Activated CD8-positive, alpha-beta T cell treated with anti-CD3 and anti-CD28 coated beads for 36 hours (primary cell): ENCODE measurements at regions of chr20 and their contacts with region 1.

Region 1: DNA sequence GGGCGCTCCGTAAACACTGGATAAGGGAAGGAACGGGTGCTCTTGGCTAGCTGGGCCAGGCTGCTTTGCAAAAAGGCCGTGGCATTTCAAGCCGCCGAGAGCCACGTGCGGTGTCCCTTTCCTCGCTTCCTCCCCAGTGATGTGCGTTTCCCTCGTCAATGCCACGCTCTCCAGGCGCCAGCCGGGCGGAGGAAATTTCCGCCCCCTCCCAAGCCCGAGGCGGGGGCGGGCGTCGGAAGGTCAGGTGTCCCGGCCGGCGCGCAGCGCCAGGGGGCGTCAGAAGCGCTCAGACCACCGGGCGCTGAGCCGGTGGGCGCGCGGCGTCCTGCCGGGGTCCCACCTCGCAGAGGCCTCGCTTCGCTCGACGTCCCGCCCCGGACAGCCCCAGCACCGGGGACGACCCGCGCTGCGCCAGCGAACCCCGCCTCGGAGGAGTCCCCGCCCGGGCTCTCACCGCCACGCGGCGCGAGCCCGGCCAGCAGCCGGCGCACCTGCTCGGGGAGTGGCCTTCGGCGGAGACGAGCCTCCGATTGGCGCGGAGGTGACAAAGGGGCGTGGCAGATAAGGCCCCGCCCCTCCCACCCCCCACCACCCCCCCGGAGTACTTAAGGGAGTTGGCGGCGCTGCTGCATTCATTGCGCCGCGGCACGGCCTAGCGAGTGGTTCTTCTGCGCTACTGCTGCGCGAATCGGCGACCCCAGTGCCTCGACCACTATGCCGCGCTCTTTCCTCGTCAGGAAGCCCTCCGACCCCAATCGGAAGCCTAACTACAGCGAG is at the start of gene SNAI1:
- DNase-seq: peak; percentile 81
- ATAC-seq: peak; percentile 89
- H3K4me3 Mint-ChIP-seq: peak within 1 kb of the TSS; percentile 65
- H3K27ac Mint-ChIP-seq: peak within 1 kb of the TSS; percentile 66
- H3K4me1 Mint-ChIP-seq: peaks cover 30% of the 10 kb centered on the region
- H3K27me3 Mint-ChIP-seq: peaks cover 3% of the 10 kb centered on the region
- CTCF ChIP-seq: peak; percentile 74
- total RNA-seq, gene SNAI1: 0.90 to 1.4 TPM

Region 2: GRCh38 chr20:49999329-49999728 is 16.8 kb after region 1 on chr20:
- CTCF ChIA-PET with region 1: interaction called, 20 read pairs
- POLR2A ChIA-PET with region 1: no interaction called
- intact Hi-C with region 1: no loop called
- DNase-seq: peak; percentile 86
- ATAC-seq: peak; percentile 83
- H3K4me3 Mint-ChIP-seq: no peak overlapping the region
- H3K27ac Mint-ChIP-seq: no peak overlapping the region
- H3K4me1 Mint-ChIP-seq: peaks cover 22% of the 10 kb centered on the region
- H3K27me3 Mint-ChIP-seq: peaks cover 3% of the 10 kb centered on the region
- CTCF ChIP-seq: no peak

Region 3: DNA sequence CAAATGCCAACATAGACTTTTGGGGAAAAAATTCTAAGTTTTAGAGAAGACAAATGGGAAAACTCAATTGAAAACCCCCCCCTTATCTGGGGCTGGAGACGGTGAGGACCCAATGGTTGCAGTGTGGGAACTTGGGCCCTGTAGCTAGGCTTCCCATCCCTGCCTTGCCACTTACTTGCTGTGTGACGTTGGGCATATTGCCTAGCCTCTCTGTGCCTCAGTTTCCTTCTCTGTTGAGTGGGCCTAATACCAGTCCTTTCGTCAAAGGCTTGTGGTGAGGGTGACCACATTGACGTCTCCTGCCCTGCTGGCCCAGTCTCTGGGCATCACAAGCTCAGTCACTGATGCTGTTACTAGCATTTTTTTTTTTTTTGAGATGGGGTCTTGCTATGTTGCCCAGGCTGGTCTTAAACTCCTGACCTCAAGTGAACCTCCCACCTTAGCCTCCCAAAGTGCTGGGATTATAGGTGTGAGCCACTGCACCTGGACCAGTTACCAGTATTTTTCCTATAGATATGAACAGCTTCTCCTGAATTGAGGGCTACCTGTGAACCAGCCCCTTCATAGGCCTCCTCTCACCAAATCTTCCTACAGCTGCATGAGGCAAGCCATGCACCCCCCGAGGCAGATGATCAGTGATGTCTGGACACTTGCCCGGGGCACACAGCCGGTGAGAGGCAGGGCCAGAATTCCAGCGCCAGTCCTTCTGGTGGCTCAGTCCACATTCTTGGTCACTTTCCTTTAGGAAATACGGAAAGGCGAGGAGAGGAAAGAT is 79.4 kb after region 1 on chr20:
- CTCF ChIA-PET with region 1: interaction called, 17 read pairs
- POLR2A ChIA-PET with region 1: no interaction called
- intact Hi-C with region 1: no loop called
- DNase-seq: no peak
- ATAC-seq: no peak
- H3K4me3 Mint-ChIP-seq: no peak overlapping the region
- H3K27ac Mint-ChIP-seq: no peak overlapping the region
- H3K4me1 Mint-ChIP-seq: no peaks in the 10 kb centered on the region
- H3K27me3 Mint-ChIP-seq: no peaks in the 10 kb centered on the region
- CTCF ChIP-seq: no peak

Region 4: DNA sequence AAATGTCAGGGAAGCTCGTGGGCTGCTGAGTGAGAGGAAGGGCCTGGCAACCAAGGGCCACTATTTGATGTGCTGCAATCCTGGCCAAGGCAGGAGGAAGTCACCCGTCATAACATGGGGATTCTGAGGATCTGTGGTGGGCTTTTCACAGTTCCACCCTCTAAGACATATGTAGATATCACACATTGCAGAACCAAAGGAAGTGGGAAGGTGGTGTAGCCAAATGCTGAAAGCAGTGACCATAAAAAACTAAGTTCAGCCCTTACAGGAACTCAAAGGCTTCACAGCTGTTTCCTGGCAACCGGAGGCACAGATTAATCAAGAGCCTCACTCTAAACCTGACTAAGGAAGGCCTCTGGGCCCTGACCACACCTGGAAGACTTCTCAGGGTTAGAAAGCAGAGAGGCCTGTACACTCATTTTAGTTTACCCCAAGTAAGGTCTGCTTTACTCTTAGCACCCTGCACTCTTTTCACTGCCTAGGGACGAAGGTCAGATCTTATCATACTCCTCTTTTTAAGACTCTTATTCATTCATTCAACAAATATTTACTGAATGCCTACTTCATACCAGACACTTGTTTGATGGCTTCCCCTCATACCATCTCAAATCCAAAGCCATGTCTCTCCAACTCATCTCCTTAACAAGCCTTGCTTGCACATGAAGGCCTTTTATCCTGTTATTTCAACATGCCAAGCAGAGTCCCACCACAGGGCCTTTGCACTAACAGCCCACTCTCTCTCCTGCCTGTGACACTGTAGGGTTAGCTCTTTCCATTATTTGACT is 127.8 kb after region 1 on chr20:
- CTCF ChIA-PET with region 1: interaction called, 10 read pairs
- POLR2A ChIA-PET with region 1: interaction called, 3 read pairs
- intact Hi-C with region 1: no loop called
- DNase-seq: peak; percentile 84
- ATAC-seq: peak; percentile 50
- H3K4me3 Mint-ChIP-seq: peak overlapping the region; percentile 94
- H3K27ac Mint-ChIP-seq: peak overlapping the region; percentile 95
- H3K4me1 Mint-ChIP-seq: peaks cover 80% of the 10 kb centered on the region
- H3K27me3 Mint-ChIP-seq: no peaks in the 10 kb centered on the region
- CTCF ChIP-seq: no peak

Region 5: DNA sequence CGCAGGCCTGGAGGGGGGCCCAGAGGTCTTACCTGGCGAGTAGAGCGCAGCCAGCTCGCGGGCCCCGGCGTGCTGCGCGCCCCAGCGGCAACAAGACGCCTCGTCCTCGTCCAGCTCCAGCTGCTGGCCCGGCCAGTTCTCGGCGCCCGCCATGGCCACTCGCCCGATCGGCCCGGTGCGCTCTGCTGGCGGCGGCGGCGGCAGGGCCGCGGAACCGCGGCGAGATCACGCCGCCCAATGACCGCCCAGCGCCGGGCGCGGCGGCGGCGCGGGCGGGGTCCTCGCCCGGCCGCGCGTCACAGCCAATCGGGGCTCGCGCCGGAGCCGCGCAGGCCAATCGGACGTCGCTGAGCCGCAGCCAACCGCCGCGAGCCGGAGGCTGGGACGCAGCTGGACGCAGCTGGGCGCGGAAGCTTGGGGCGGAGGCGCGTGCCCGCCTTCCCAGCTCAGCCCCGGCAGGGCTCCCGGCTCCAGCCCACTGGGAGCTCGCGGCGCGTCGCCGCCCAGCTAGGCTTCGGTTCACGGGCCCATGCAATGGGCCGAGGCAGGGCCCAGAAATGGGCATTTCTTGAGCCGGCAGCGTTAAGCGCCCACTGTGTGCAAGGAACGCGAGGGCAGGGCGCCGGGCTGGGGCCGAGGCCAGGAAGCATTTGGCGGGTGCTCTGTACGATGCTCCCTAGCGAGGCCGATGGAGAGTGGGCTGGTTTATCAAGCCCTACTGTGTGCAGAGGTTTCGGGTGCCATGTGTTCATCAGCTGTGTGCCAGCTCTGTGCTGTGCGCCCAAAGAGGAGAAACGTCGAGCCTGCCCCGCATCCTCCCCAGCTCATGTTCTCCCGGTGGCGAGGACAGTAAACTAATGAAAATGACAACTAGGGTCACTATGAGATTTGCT is 171.2 kb after region 1 on chr20 and contains the start of gene PEDS1:
- CTCF ChIA-PET with region 1: interaction called, 19 read pairs
- POLR2A ChIA-PET with region 1: interaction called, 3 read pairs
- intact Hi-C with region 1: no loop called
- DNase-seq: peak; percentile 84
- ATAC-seq: peak; percentile 96
- H3K4me3 Mint-ChIP-seq: peak within 1 kb of the TSS; percentile 85
- H3K27ac Mint-ChIP-seq: peak within 1 kb of the TSS; percentile 84
- H3K4me1 Mint-ChIP-seq: peaks cover 35% of the 10 kb centered on the region
- H3K27me3 Mint-ChIP-seq: no peaks in the 10 kb centered on the region
- CTCF ChIP-seq: no peak
- total RNA-seq, gene PEDS1: 16.0 to 17.3 TPM

Region 6: DNA sequence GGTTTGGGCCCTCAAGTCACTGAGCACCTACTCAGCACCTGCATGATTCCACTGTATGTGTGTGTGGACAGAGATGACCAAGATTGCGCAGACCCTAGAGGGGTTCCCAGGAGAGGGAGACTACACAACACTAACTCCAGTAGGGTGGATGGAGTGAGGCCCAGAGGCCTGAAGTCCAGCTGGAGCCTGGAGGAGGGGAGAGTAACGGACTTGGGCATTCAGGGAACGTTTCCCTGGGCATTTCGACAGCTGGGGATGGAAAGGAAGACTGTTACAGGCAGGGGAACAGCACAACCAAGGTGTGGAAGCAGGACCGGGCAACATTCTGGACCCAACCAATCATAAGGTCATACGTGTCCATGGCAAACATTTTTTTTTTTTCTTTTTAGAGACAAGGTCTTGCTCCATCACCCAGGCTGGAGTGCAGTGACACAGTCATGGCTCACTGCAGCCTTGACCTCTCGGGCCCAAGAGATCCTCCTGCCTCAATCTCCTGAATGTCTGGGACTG is 197.0 kb after region 1 on chr20:
- CTCF ChIA-PET with region 1: interaction called, 14 read pairs
- POLR2A ChIA-PET with region 1: no interaction called
- intact Hi-C with region 1: no loop called
- DNase-seq: no peak
- ATAC-seq: peak; percentile 20
- H3K4me3 Mint-ChIP-seq: no peak overlapping the region
- H3K27ac Mint-ChIP-seq: no peak overlapping the region
- H3K4me1 Mint-ChIP-seq: no peaks in the 10 kb centered on the region
- H3K27me3 Mint-ChIP-seq: peaks cover 5% of the 10 kb centered on the region
- CTCF ChIP-seq: peak; percentile 56